ENCODE measurements at regions of chr13 and their contacts with region 1.

Region 1: GRCh38 chr13:51125498-51126226 is 14.6 kb upstream of the C13orf42 start:
- DNase-seq: peak; percentile 66
- ATAC-seq: peak; percentile 85
- H3K4me3 Mint-ChIP-seq: no peak overlapping the region
- H3K27ac Mint-ChIP-seq: 0 out of 2 replicates have a peak overlapping the region, but pooled peaks have one; percentile 4
- H3K4me1 Mint-ChIP-seq: peaks cover 41% of the 10 kb centered on the region
- H3K27me3 Mint-ChIP-seq: peaks cover 6% of the 10 kb centered on the region
- CTCF ChIP-seq: peak; percentile 77

Region 2: DNA sequence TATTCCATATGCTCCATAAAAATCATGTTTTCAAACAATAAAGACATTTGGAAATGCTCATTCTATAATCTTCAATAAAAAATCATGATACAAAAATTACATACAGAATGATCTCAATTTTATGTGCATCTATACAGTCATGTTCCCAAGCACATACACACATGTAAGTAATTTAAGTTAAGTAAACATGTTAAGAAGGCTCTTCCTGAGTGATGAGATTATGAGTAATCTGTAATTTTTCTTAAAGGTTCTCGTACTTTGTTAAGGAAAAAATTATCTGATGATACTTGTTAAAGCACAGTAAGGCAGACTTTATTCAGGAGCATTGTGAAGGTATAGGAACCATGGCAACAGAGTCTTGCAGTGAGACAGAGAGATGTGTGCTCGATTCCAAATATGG is 252.2 kb before region 1 on chr13:
- CTCF ChIA-PET with region 1: no interaction called
- POLR2A ChIA-PET with region 1: no interaction called
- DNase-seq: no peak
- ATAC-seq: no peak
- H3K4me3 Mint-ChIP-seq: no peak overlapping the region
- H3K27ac Mint-ChIP-seq: no peak overlapping the region
- H3K4me1 Mint-ChIP-seq: no peaks in the 10 kb centered on the region
- H3K27me3 Mint-ChIP-seq: no peaks in the 10 kb centered on the region; the same call in 1 of the 2 replicates
- CTCF ChIP-seq: no peak

Region 3: GRCh38 chr13:50951366-50951765 is 174.3 kb before region 1 on chr13:
- CTCF ChIA-PET with region 1: no interaction called
- POLR2A ChIA-PET with region 1: no interaction called
- DNase-seq: no peak
- ATAC-seq: no peak
- H3K4me3 Mint-ChIP-seq: no peak overlapping the region
- H3K27ac Mint-ChIP-seq: no peak overlapping the region
- H3K4me1 Mint-ChIP-seq: peaks cover 16% of the 10 kb centered on the region
- H3K27me3 Mint-ChIP-seq: no peaks in the 10 kb centered on the region
- CTCF ChIP-seq: no peak

Region 4: DNA sequence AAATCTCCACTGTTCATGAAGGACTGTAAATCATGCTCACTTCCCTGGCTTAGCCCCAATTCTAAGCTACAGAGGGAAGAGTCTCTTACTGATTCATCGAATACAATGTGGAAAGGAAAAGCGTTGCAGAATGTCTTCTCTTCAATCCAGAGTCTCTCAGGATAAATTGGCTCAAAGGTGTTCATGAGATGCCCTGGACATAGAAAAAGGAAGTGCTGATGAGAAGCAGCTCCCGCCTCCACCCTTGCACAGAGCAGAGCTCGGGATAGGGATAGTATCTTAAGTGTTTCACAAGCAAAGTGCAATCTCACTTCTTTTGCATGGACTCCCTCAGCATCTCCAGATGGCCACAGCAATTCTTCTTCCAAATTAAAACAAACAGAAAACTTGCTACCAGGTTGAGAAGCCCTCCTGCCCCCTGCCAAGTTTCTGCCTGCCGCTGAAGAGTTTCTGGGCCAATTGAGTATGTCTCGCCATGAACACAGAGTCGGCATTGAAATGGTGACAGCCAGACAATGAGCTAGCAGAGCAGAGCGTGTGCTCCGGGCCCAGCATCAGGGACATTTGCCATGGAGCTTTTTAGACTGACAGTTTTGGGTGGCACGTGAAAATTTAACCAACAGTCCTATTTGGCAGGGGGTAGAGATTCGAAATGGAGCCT is 100.3 kb before region 1 on chr13:
- CTCF ChIA-PET with region 1: no interaction called
- POLR2A ChIA-PET with region 1: no interaction called
- DNase-seq: no peak
- ATAC-seq: no peak
- H3K4me3 Mint-ChIP-seq: no peak overlapping the region
- H3K27ac Mint-ChIP-seq: no peak overlapping the region
- H3K4me1 Mint-ChIP-seq: peaks cover 6% of the 10 kb centered on the region
- H3K27me3 Mint-ChIP-seq: no peaks in the 10 kb centered on the region
- CTCF ChIP-seq: no peak

Region 5: GRCh38 chr13:51112771-51113170 is 12.9 kb before region 1 on chr13:
- CTCF ChIA-PET with region 1: interaction called, 13 read pairs
- POLR2A ChIA-PET with region 1: no interaction called
- DNase-seq: no peak
- ATAC-seq: no peak
- H3K4me3 Mint-ChIP-seq: no peak overlapping the region
- H3K27ac Mint-ChIP-seq: no peak overlapping the region
- H3K4me1 Mint-ChIP-seq: no peaks in the 10 kb centered on the region
- H3K27me3 Mint-ChIP-seq: peaks cover 1% of the 10 kb centered on the region; the same call in 1 of the 2 replicates
- CTCF ChIP-seq: no peak

Region 6: GRCh38 chr13:51154029-51154555 is 28.4 kb after region 1 on chr13:
- CTCF ChIA-PET with region 1: interaction called, 64 read pairs
- POLR2A ChIA-PET with region 1: no interaction called
- DNase-seq: no peak
- ATAC-seq: no peak
- H3K4me3 Mint-ChIP-seq: no peak overlapping the region
- H3K27ac Mint-ChIP-seq: peak overlapping the region; percentile 2
- H3K4me1 Mint-ChIP-seq: peaks cover 79% of the 10 kb centered on the region
- H3K27me3 Mint-ChIP-seq: no peaks in the 10 kb centered on the region; the same call in 1 of the 2 replicates
- CTCF ChIP-seq: no peak

Region 7: GRCh38 chr13:51175001-51175400 is 49.3 kb after region 1 on chr13:
- CTCF ChIA-PET with region 1: interaction called, 13 read pairs
- POLR2A ChIA-PET with region 1: interaction called, 3 read pairs
- DNase-seq: no peak
- ATAC-seq: peak; percentile 68
- H3K4me3 Mint-ChIP-seq: peak overlapping the region; percentile 97
- H3K27ac Mint-ChIP-seq: peak overlapping the region; percentile 88
- H3K4me1 Mint-ChIP-seq: peaks cover 66% of the 10 kb centered on the region
- H3K27me3 Mint-ChIP-seq: no peaks in the 10 kb centered on the region; the same call in 1 of the 2 replicates
- CTCF ChIP-seq: no peak

Region 8: GRCh38 chr13:51222037-51222685 is 96.5 kb after region 1 on chr13 and contains the start of gene FAM124A:
- CTCF ChIA-PET with region 1: interaction called, 28 read pairs
- POLR2A ChIA-PET with region 1: no interaction called
- DNase-seq: peak; percentile 61
- ATAC-seq: peak; percentile 69
- H3K4me3 Mint-ChIP-seq: peak within 1 kb of the TSS; percentile 92
- H3K27ac Mint-ChIP-seq: peak within 1 kb of the TSS; percentile 68
- H3K4me1 Mint-ChIP-seq: peaks cover 57% of the 10 kb centered on the region
- H3K27me3 Mint-ChIP-seq: peaks cover 15% of the 10 kb centered on the region
- CTCF ChIP-seq: no peak; the same call in 1 of the 2 replicates
- total RNA-seq, gene FAM124A: 41.2 to 45.8 TPM (median 41.6 TPM) in 3 replicates

Region 9: DNA sequence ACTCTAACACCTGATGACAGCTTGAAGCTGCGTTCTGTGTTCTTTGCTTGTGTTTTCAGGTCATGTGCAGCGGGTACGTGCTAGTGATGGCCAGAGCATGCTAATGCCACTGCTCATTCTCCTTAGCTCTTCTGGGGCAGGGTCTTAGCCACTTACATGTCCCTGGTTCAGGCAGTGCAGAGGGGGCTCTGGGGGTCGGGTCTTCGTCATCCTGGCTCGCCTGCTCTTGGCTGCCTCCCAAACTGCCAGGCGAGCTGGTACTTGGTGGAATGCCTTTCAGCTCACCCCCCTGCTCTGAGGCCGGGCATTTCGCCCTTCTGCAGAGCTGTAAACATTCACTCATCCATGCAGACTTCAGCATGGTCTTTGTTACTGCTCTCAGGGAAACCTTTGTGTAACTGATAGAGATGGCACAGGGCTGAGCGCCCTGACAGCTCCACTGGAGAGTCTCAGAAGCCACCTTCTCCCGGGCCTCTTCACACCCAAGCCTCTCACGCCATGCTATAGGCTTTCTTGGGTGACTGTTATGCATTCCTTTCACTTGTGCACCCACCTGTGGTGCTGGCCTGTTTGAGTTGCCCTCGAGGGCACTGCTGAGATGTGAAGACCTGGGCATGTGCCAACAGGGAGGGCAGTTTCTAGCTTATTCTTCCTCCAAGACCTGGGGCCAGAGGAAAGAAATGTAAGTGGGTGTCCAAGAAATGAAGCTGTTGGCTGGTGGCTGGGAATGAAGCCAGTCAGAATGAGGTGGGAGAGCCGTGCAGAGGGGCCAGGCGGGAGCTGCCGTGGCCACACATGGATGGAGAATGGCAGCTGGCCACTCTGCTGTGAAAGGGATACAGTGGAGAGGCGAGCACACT is 121.0 kb after region 1 on chr13:
- CTCF ChIA-PET with region 1: interaction called, 11 read pairs
- POLR2A ChIA-PET with region 1: interaction called, 5 read pairs
- DNase-seq: no peak
- ATAC-seq: no peak
- H3K4me3 Mint-ChIP-seq: no peak overlapping the region
- H3K27ac Mint-ChIP-seq: peak overlapping the region; percentile 46
- H3K4me1 Mint-ChIP-seq: no peaks in the 10 kb centered on the region; the same call in 1 of the 2 replicates
- H3K27me3 Mint-ChIP-seq: no peaks in the 10 kb centered on the region
- CTCF ChIP-seq: no peak

Region 10: DNA sequence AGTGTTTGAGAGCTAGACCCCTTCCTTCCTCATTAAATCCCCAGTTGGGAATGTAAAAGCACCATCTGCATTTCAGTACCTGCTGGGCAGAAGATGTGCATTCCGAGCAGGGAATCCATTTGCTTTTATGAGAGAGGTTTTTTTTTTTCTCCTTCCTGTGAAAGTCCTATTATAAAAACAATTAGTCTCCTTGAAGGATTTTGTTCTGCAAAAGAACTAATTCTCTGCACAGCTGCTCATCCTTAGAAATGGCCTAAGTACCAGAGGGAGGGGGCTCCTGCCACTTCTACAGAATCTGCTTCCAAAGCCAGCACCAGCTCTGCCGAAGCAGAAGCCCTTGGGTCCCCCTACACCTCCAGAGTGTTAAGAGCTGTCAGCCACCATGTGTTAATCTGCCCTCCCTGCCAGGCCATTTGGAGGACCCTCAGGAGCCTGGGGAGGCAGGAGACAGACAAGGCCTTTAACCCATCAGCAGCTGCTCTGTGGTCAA is 177.4 kb after region 1 on chr13:
- CTCF ChIA-PET with region 1: interaction called, 10 read pairs
- POLR2A ChIA-PET with region 1: no interaction called
- DNase-seq: peak; percentile 58
- ATAC-seq: peak; percentile 90
- H3K4me3 Mint-ChIP-seq: peak overlapping the region; percentile 4; the same call in 1 of the 2 replicates
- H3K27ac Mint-ChIP-seq: peak overlapping the region; percentile 88
- H3K4me1 Mint-ChIP-seq: peaks cover 84% of the 10 kb centered on the region
- H3K27me3 Mint-ChIP-seq: peaks cover 7% of the 10 kb centered on the region
- CTCF ChIP-seq: no peak

Measured in WTC11 (cell line).